Activated T-helper 1 cell treated with anti-CD3 and anti-CD28 coated beads, Interleukin-12 subunit alpha, Interleukin-12 subunit beta, Interleukin-2, Interleukin-4 antibody, amounts not matched to agents 30 ng/mL and 10 ng/mL and 1 ng/mL, durations not matched to agents 14 hours and 24 hours and 36 hours (primary cell): ENCODE measurements at regions of chr2 and their contacts with region 1.

Region 1: DNA sequence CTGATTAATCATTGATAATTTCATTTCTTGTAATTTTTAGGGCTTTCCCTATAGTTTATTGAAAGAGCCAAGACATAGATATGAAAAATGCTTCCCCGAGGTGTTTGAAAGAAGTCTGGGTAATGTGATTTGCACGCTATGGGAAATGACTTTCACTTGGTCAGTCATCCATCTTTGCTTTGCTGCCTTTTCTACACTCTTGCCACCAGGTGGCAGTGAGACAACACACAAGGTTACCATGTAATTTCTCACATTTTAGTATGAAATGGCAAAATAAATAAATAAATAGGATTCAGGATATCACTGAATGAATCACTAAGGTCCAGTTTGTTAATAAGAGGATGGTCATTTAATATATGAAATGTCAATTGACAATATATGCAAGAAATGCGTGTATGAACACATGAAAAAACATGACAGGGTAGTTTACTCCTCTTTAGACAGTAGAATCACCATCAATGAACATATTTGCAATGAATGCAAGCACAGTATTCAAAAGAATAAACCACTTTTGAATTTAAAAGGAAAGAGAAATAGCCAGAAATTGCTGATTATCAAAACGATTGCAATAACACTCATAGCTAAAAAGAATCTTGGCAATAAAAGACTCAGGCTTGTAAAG is 52.2 kb upstream of the KCNH7 start:
- DNase-seq: no peak
- H3K4me3 Mint-ChIP-seq: no peak overlapping the region
- H3K27ac Mint-ChIP-seq: no peak overlapping the region
- H3K4me1 Mint-ChIP-seq: no peaks in the 10 kb centered on the region
- H3K27me3 Mint-ChIP-seq: no peaks in the 10 kb centered on the region

Region 2: GRCh38 chr2:163132850-163133249 is 242.0 kb after region 1 on chr2:
- intact Hi-C with region 1: loop called (anchors 5 kb)
- DNase-seq: no peak
- H3K4me3 Mint-ChIP-seq: no peak overlapping the region
- H3K27ac Mint-ChIP-seq: no peak overlapping the region
- H3K4me1 Mint-ChIP-seq: no peaks in the 10 kb centered on the region
- H3K27me3 Mint-ChIP-seq: no peaks in the 10 kb centered on the region